ENCODE measurements at regions of chr3 and their contacts with region 1.

Region 1: DNA sequence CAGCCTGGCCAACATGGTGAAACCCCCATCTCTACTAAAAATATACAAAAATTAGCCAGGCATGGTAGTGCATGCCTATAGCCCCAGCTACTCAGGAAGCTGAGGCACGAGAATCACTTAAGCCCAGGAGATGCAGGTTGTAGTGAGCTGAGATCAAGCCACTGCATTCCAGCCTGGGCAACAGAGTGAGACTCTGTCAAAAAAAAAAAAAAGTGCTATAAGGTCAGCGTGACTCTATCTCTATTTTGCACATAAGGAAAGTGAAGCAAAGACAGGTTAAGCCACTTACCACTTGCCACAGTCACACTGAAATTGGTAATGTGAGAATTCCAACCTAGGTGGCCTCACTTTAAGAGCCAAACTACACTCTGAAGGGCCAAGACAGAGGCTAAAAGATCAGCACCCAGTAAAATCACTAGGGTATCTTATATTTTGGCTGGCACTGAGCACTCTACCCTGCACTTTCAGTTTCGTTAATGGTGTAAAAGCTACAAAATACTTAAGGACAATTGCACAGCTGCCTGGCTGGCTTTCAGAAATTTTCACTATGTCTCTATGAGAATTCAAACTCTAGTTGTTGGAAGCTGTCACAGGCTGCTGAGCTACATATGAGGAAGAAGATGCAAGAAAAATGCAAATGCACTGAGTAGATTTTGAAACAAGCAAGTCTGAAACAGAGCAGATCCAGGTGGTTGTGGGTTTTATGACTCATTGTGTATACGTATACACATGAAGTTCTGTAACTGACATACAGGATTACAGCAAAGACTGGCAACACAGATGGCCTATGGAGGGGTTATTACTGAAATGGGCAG is 32.7 kb downstream of the TRANK1 start:
- DNase-seq: peak in 7 of 9 donors; percentile 31 to 80 (median 50)
- ATAC-seq: peak; percentile 88
- H3K4me3 ChIP-seq: peak overlapping the region; percentile 47
- H3K4me3 Mint-ChIP-seq: peak overlapping the region; percentile 5 to 81 (median 74)
- H3K27ac ChIP-seq: peak overlapping the region; percentile 68
- H3K27ac Mint-ChIP-seq: peak overlapping the region; percentile 58 to 95 (median 84)
- H3K4me1 ChIP-seq: peaks cover 24 to 28% of the 10 kb centered on the region in 2 donors
- H3K4me1 Mint-ChIP-seq: peaks cover 24 to 48% (median 46%) of the 10 kb centered on the region in 7 donors
- H3K27me3 ChIP-seq: no peaks in the 10 kb centered on the region
- H3K27me3 Mint-ChIP-seq: peaks cover 0 to 2% (median 0%) of the 10 kb centered on the region in 5 donors

Region 2: DNA sequence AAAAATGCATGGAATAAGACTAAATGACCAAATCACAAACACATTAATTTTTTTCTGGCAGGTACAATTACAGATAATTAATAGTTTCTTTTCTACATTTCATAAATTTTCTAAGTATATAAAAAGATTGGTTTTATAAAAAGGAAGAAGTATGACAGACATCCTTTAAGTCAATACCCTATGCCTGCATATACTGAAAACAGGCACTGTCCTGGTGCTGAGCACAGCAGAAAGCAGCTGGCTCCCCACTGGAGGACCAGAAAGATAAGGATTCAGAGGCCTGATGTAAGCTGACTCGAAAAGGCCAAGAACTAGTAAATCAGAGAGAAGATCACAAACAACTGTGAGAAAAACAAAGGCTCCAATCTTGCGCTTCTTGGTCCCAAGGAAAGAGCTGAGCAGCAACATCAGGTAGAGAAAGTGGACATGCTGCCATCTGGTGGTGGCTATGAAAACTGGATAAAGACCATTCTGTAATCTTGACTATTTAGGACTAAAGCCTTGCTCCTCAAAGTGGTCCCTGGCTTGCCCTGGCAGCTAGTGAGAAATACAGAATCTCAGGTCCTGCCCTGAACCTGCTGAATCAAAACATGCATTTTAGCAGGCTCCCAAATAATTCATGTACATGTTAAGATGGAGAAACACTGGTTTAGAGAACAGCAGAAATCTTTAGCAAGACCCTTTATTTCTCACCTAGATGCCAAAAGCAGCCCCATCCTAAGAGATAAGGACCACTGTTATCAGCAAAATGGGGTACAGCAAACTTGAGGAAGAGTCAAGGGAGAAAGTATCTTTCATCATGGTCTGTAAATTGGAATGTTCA is 43.4 kb before region 1 on chr3:
- CTCF ChIA-PET with region 1: interaction called, 4 read pairs
- POLR2A ChIA-PET with region 1: interaction called, 5 read pairs
- intact Hi-C with region 1: loop called in 1 of 2 experiments (anchors 2 kb)
- DNase-seq: peak in 8 of 9 donors; percentile 27 to 55 (median 46)
- ATAC-seq: peak; percentile 88
- H3K4me3 ChIP-seq: no peak overlapping the region
- H3K4me3 Mint-ChIP-seq: peak overlapping the region in 1 of 10 donors; percentile 53
- H3K27ac ChIP-seq: no peak overlapping the region
- H3K27ac Mint-ChIP-seq: peak overlapping the region in 5 of 9 donors; percentile 26 to 81 (median 63)
- H3K4me1 ChIP-seq: peaks cover 5 to 10% of the 10 kb centered on the region in 2 donors
- H3K4me1 Mint-ChIP-seq: peaks cover 12 to 43% (median 36%) of the 10 kb centered on the region in 7 donors
- H3K27me3 ChIP-seq: no peaks in the 10 kb centered on the region
- H3K27me3 Mint-ChIP-seq: peaks cover 0 to 4% (median 0%) of the 10 kb centered on the region in 5 donors

Region 3: GRCh38 chr3:36876181-36876936 is 35.8 kb before region 1 on chr3:
- CTCF ChIA-PET with region 1: interaction called, 4 read pairs
- POLR2A ChIA-PET with region 1: interaction called, 5 read pairs
- intact Hi-C with region 1: loop called (anchors 1 kb)
- DNase-seq: peak in 8 of 9 donors; percentile 26 to 73 (median 62)
- ATAC-seq: peak; percentile 93
- H3K4me3 ChIP-seq: peak overlapping the region; percentile 39
- H3K4me3 Mint-ChIP-seq: peak overlapping the region; percentile 67 to 88 (median 80)
- H3K27ac ChIP-seq: peak overlapping the region; percentile 73
- H3K27ac Mint-ChIP-seq: peak overlapping the region; percentile 91 to 96 (median 95)
- H3K4me1 ChIP-seq: peaks cover 21 to 45% of the 10 kb centered on the region in 2 donors
- H3K4me1 Mint-ChIP-seq: peaks cover 34 to 68% (median 55%) of the 10 kb centered on the region in 7 donors
- H3K27me3 ChIP-seq: no peaks in the 10 kb centered on the region
- H3K27me3 Mint-ChIP-seq: peaks cover 0 to 7% (median 0%) of the 10 kb centered on the region in 5 donors

Region 4: GRCh38 chr3:36893137-36893557 is 19.1 kb before region 1 on chr3:
- CTCF ChIA-PET with region 1: interaction called, 8 read pairs
- POLR2A ChIA-PET with region 1: interaction called, 62 read pairs
- intact Hi-C with region 1: loop called in 1 of 2 experiments (anchors 1 kb)
- DNase-seq: peak in 7 of 9 donors; percentile 31 to 80 (median 69)
- ATAC-seq: peak; percentile 92
- H3K4me3 ChIP-seq: no peak overlapping the region
- H3K4me3 Mint-ChIP-seq: peak overlapping the region in 8 of 10 donors; percentile 17 to 64 (median 48)
- H3K27ac ChIP-seq: peak overlapping the region; percentile 59
- H3K27ac Mint-ChIP-seq: peak overlapping the region; percentile 58 to 95 (median 94)
- H3K4me1 ChIP-seq: peaks cover 29 to 38% of the 10 kb centered on the region in 2 donors
- H3K4me1 Mint-ChIP-seq: peaks cover 45 to 75% (median 57%) of the 10 kb centered on the region in 7 donors
- H3K27me3 ChIP-seq: no peaks in the 10 kb centered on the region
- H3K27me3 Mint-ChIP-seq: no peaks in the 10 kb centered on the region

Region 5: DNA sequence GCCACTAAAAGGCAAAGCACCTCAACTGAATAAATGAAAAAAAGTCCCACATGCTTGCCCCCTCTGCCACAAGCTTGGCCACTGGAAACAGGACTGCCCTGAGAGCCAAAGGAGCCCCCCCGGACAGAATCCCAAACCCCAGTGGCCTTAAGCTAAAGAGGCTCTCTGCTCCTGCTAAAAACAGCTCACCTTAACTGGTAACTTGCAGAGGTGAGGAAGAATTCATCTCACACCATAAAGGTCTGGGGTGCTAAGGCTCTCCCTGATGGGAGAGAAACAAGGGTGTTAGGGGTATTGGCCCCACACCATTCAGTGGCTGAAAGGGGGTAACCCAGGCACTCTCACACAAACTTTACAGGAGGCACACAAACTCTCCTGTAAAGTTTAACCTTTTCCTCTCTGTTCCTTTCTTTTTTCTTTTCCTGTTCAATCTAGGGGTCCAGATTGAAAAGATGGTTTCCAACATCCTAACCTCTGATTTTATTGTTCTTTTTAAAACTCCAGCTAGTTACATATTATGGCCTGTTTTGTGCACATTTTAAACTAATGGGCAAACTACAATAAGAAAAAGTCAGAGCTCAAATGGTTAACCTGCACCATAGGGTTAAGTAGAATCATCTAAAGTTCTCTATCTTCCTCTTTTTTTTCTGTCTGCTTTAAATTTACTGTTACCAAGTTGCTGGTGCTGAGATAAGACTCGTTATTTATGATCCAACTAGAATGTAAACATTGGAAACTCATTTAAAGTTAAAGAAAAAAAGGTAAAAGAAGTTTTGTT is 12.7 kb after region 1 on chr3:
- CTCF ChIA-PET with region 1: no interaction called
- POLR2A ChIA-PET with region 1: interaction called, 5 read pairs
- intact Hi-C with region 1: loop called in 1 of 2 experiments (anchors 1 kb)
- DNase-seq: no peak
- ATAC-seq: no peak
- H3K4me3 ChIP-seq: no peak overlapping the region
- H3K4me3 Mint-ChIP-seq: peak overlapping the region in 1 of 10 donors; percentile 20
- H3K27ac ChIP-seq: no peak overlapping the region
- H3K27ac Mint-ChIP-seq: peak overlapping the region in 4 of 9 donors; percentile 26 to 67 (median 32)
- H3K4me1 ChIP-seq: no peaks in the 10 kb centered on the region
- H3K4me1 Mint-ChIP-seq: peaks cover 0 to 25% (median 21%) of the 10 kb centered on the region in 7 donors
- H3K27me3 ChIP-seq: no peaks in the 10 kb centered on the region
- H3K27me3 Mint-ChIP-seq: peaks cover 0 to 6% (median 0%) of the 10 kb centered on the region in 5 donors

Region 6: DNA sequence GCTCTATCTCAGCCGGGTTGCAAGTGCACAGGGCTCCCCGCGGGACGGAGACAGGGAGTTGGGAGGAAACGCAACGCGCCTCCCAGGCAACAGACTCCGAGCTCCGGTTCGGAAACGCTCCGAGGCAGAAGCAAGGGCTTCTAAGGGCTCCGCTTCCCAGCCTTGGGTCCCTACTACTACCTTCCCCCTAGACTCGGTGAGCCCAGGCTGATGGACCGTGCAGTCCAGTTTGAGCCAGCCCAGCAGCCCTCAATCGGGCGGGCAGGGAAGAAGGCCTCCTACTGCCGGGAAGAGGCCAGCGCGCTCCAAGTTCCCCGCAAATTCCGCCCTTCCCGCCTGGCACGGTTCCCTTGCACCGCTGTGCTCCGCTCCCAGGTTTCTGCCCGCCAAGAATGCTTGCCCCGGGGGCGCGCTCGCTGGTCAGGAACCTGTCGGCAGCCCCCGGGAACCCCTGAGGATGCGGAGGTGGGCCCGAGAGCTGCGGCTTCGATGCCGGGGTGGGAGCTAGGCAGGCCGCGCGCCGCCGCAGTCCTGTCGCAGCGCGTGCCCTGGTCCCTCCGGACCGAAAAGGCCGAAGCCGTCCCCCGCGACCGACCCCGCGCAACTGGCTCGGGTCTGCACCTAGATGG is 31.9 kb after region 1 on chr3:
- CTCF ChIA-PET with region 1: interaction called, 3 read pairs
- POLR2A ChIA-PET with region 1: interaction called, 39 read pairs
- intact Hi-C with region 1: loop called (anchors 1 to 2 kb)
- DNase-seq: peak; percentile 14 to 42 (median 28)
- ATAC-seq: peak; percentile 46
- H3K4me3 ChIP-seq: peak overlapping the region; percentile 70
- H3K4me3 Mint-ChIP-seq: peak overlapping the region; percentile 79 to 91 (median 85)
- H3K27ac ChIP-seq: peak overlapping the region; percentile 74
- H3K27ac Mint-ChIP-seq: peak overlapping the region; percentile 42 to 87 (median 63)
- H3K4me1 ChIP-seq: peaks cover 5 to 6% of the 10 kb centered on the region in 2 donors
- H3K4me1 Mint-ChIP-seq: peaks cover 0 to 33% (median 26%) of the 10 kb centered on the region in 7 donors
- H3K27me3 ChIP-seq: no peaks in the 10 kb centered on the region
- H3K27me3 Mint-ChIP-seq: peaks cover 0 to 28% (median 0%) of the 10 kb centered on the region in 5 donors

Region 7: DNA sequence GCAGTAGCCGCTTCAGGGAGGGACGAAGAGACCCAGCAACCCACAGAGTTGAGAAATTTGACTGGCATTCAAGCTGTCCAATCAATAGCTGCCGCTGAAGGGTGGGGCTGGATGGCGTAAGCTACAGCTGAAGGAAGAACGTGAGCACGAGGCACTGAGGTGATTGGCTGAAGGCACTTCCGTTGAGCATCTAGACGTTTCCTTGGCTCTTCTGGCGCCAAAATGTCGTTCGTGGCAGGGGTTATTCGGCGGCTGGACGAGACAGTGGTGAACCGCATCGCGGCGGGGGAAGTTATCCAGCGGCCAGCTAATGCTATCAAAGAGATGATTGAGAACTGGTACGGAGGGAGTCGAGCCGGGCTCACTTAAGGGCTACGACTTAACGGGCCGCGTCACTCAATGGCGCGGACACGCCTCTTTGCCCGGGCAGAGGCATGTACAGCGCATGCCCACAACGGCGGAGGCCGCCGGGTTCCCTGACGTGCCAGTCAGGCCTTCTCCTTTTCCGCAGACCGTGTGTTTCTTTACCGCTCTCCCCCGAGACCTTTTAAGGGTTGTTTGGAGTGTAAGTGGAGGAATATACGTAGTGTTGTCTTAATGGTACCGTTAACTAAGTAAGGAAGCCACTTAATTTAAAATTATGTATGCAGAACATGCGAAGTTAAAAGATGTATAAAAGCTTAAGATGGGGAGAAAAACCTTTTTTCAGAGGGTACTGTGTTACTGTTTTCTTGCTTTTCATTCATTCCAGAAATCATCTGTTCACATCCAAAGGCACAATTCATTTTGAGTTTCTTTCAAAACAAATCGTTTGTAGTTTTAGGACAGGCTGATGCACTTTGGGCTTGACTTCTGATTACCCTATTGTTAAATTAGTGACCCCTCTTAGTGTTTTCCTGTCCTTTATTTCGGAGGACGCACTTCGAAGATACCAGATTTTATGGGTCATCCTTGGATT is 81.4 kb after region 1 on chr3 and contains the start of gene MLH1:
- CTCF ChIA-PET with region 1: no interaction called
- POLR2A ChIA-PET with region 1: interaction called, 24 read pairs
- intact Hi-C with region 1: loop called (anchors 1 kb)
- DNase-seq: peak; percentile 91 to 100 (median 99)
- ATAC-seq: peak; percentile 90
- H3K4me3 ChIP-seq: peak within 1 kb of the TSS; percentile 80
- H3K4me3 Mint-ChIP-seq: peak within 1 kb of the TSS in 1 of 10 donors; percentile 26
- H3K27ac ChIP-seq: peak within 1 kb of the TSS; percentile 83
- H3K27ac Mint-ChIP-seq: no peak within 1 kb of the TSS
- H3K4me1 ChIP-seq: peaks cover 36 to 40% of the 10 kb centered on the region in 2 donors
- H3K4me1 Mint-ChIP-seq: peaks cover 23 to 43% (median 38%) of the 10 kb centered on the region in 7 donors
- H3K27me3 ChIP-seq: no peaks in the 10 kb centered on the region
- H3K27me3 Mint-ChIP-seq: no peaks in the 10 kb centered on the region
- total RNA-seq, gene MLH1: 26.4 to 42.0 (median 31.7) TPM

Region 8: GRCh38 chr3:37028329-37028728 is 116.1 kb after region 1 on chr3:
- CTCF ChIA-PET with region 1: no interaction called
- POLR2A ChIA-PET with region 1: no interaction called
- intact Hi-C with region 1: no loop called
- DNase-seq: no peak
- ATAC-seq: no peak
- H3K4me3 ChIP-seq: no peak overlapping the region
- H3K4me3 Mint-ChIP-seq: no peak overlapping the region
- H3K27ac ChIP-seq: no peak overlapping the region
- H3K27ac Mint-ChIP-seq: no peak overlapping the region
- H3K4me1 ChIP-seq: no peaks in the 10 kb centered on the region
- H3K4me1 Mint-ChIP-seq: peaks cover 0 to 10% (median 0%) of the 10 kb centered on the region in 7 donors
- H3K27me3 ChIP-seq: no peaks in the 10 kb centered on the region
- H3K27me3 Mint-ChIP-seq: no peaks in the 10 kb centered on the region

Measured in naive thymus-derived CD4-positive, alpha-beta T cell (primary cell).